ENCODE measurements at regions of chr3 and their contacts with region 1.

Region 1: DNA sequence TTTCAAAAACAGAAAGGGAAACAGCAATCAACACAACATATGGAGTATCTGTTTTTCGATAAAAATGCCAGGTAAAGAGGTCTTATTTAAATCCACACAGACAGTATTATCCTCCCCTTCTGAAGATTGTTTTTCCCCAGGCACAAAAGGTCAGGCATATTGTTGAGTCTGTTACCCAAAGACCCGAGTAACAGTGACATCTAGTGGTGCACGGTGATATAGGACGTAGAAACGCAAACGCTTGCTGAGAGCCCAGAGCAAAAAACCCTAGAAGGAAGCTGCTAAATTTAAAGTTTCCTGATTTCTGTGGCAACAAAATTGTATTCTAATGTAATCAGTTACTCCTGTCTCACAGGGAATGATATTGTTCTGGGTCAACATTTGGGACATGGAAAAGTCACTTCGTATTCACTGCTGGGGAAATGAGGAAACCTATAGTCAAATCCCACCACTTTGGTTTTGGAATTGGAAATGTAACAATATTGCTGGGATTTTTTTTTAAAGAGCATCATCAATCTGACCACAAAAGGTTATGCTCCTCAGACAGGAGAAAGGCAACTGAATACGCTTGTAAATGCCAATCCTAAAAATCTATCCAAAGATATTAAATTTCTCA is 312.7 kb upstream of the CCDC54 start:
- DNase-seq: peak in 1 of 2 donors; percentile 85
- H3K4me3 ChIP-seq: peak overlapping the region in 1 of 2 donors; percentile 25
- H3K27ac ChIP-seq: peak overlapping the region in 1 of 2 donors; percentile 37
- H3K4me1 ChIP-seq: peaks cover 4 to 8% of the 10 kb centered on the region in 2 donors
- H3K27me3 ChIP-seq: no peaks in the 10 kb centered on the region
- CTCF ChIP-seq: peak; percentile 52 to 76 (median 76)

Region 2: GRCh38 chr3:105686278-105686897 is 1378.2 kb before region 1 on chr3:
- intact Hi-C with region 1: loop called (anchors 10 kb)
- DNase-seq: no peak
- H3K4me3 ChIP-seq: no peak overlapping the region
- H3K27ac ChIP-seq: no peak overlapping the region
- H3K4me1 ChIP-seq: no peaks in the 10 kb centered on the region
- H3K27me3 ChIP-seq: no peaks in the 10 kb centered on the region
- CTCF ChIP-seq: peak in 2 of 3 experiments; percentile 68 to 77

Region 3: GRCh38 chr3:106617276-106617675 is 447.3 kb before region 1 on chr3:
- intact Hi-C with region 1: loop called (anchors 5 kb)
- DNase-seq: no peak
- H3K4me3 ChIP-seq: no peak overlapping the region
- H3K27ac ChIP-seq: peak overlapping the region in 1 of 2 donors; percentile 16
- H3K4me1 ChIP-seq: peaks cover 0 to 7% of the 10 kb centered on the region in 2 donors
- H3K27me3 ChIP-seq: no peaks in the 10 kb centered on the region
- CTCF ChIP-seq: no peak

Region 4: GRCh38 chr3:106824856-106825255 is 239.7 kb before region 1 on chr3:
- intact Hi-C with region 1: loop called (anchors 1 kb)
- DNase-seq: no peak
- H3K4me3 ChIP-seq: no peak overlapping the region
- H3K27ac ChIP-seq: no peak overlapping the region
- H3K4me1 ChIP-seq: peaks cover 0 to 6% of the 10 kb centered on the region in 2 donors
- H3K27me3 ChIP-seq: no peaks in the 10 kb centered on the region
- CTCF ChIP-seq: peak in 2 of 3 experiments; percentile 29 to 42

Region 5: DNA sequence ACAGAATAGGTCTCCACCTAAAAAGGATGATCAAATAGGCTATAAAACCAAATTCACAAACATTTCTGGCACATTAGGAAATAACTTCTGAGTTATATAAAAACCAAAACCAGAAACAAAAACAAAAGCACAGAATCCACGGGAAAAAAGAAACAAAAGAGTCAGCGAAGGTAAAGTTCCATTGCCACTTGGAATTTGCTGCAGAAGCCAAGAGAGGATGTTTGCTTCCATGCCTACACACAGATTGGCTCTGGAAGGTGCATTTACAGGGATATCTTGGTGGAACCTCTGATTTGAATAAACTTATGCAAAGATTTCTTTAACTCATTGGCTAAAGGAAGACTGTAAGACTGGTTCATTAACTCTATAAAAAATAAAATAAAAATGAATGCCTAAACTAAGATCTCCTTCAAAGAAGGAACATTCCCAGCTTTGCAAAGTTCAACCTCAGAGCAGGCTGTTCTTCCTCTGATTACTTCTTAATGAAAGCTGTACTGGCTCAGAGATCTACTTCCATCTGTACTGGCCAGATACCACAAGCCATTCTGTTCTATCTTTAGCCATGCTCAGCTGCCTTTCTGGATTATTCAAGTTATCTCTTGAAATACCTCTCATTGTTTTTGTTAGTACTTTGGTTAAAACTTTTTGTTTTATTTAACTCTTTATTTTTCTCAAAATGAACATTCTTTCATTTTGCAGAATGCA is 224.8 kb before region 1 on chr3:
- intact Hi-C with region 1: no loop called
- DNase-seq: no peak
- H3K4me3 ChIP-seq: no peak overlapping the region
- H3K27ac ChIP-seq: peak overlapping the region; percentile 29 to 40
- H3K4me1 ChIP-seq: peaks cover 0 to 7% of the 10 kb centered on the region in 2 donors
- H3K27me3 ChIP-seq: no peaks in the 10 kb centered on the region
- CTCF ChIP-seq: no peak

Region 6: GRCh38 chr3:107404727-107405469 is 340.3 kb after region 1 on chr3:
- intact Hi-C with region 1: no loop called
- DNase-seq: no peak
- H3K4me3 ChIP-seq: no peak overlapping the region
- H3K27ac ChIP-seq: no peak overlapping the region
- H3K4me1 ChIP-seq: no peaks in the 10 kb centered on the region
- H3K27me3 ChIP-seq: no peaks in the 10 kb centered on the region
- CTCF ChIP-seq: no peak